Tibial artery (tissue), 4 donors: ENCODE measurements at regions of chr3 and their contacts with region 1.

Region 1: GRCh38 chr3:48439820-48440589 is at the starts of genes CCDC51 and TMA7:
- DNase-seq: peak; percentile 99
- H3K4me3 ChIP-seq: peak within 1 kb of the TSS; percentile 84 to 96
- H3K27ac ChIP-seq: peak within 1 kb of the TSS; percentile 93 to 94
- H3K4me1 ChIP-seq: peaks cover 5 to 36% (median 18%) of the 10 kb centered on the region in 4 donors
- H3K27me3 ChIP-seq: no peaks in the 10 kb centered on the region
- CTCF ChIP-seq: no peak

Region 2: GRCh38 chr3:48232734-48233133 is 207.3 kb before region 1 on chr3:
- intact Hi-C with region 1: loop called (anchors 10 kb)
- DNase-seq: peak; percentile 81 to 86
- H3K4me3 ChIP-seq: no peak overlapping the region
- H3K27ac ChIP-seq: no peak overlapping the region
- H3K4me1 ChIP-seq: peaks cover 0 to 9% (median 2%) of the 10 kb centered on the region in 4 donors
- H3K27me3 ChIP-seq: no peaks in the 10 kb centered on the region
- CTCF ChIP-seq: peak; percentile 41 to 45

Region 3: GRCh38 chr3:48275292-48276015 is 164.6 kb before region 1 on chr3:
- intact Hi-C with region 1: loop called (anchors 2 kb)
- DNase-seq: no peak
- H3K4me3 ChIP-seq: no peak overlapping the region
- H3K27ac ChIP-seq: no peak overlapping the region
- H3K4me1 ChIP-seq: no peaks in the 10 kb centered on the region
- H3K27me3 ChIP-seq: no peaks in the 10 kb centered on the region
- CTCF ChIP-seq: no peak

Region 4: GRCh38 chr3:48285675-48286074 is 154.3 kb before region 1 on chr3:
- intact Hi-C with region 1: no loop called
- DNase-seq: no peak
- H3K4me3 ChIP-seq: no peak overlapping the region
- H3K27ac ChIP-seq: no peak overlapping the region
- H3K4me1 ChIP-seq: no peaks in the 10 kb centered on the region
- H3K27me3 ChIP-seq: no peaks in the 10 kb centered on the region
- CTCF ChIP-seq: no peak

Region 5: DNA sequence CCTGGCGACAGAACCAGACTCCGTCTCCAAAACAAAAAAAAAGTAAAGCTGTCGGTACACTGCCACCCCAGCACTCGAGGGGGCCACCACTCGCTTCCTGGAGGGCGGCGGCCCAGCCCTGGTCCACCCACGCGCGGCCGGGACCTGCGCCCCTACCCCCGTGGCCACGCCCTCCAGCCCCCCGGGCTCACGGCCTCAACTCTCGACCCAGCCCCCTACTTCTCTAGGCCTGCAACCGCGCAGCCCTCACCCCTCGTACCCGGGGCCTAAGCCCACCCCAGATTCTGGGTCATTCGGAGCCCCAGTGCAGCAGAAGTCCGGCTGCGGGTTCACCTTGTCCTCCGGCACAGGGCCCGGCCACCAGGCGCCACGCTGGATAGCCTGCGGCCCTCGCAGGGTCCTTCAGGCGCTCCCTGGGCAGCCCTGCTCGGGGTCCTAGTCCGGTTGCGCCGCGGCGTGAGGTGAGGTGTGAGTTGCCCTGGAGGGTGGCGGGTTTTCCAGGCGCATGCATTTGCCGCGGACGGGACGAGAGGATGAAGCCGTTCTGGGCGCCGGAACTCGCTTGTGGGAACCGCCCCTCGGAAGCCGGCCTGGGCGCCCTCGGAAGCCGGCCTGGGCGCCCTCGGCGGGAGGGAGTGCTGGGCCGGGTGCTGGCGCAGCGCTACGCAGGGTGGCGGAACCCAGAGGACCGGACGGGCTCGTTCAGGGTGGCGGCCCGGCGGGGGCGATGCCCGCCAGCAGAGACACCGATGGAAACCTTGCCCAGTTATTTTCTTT is 138.8 kb before region 1 on chr3:
- intact Hi-C with region 1: loop called (anchors 10 kb)
- DNase-seq: peak; percentile 90 to 95
- H3K4me3 ChIP-seq: peak within 1 kb of the TSS; percentile 91 to 96
- H3K27ac ChIP-seq: peak within 1 kb of the TSS; percentile 97 to 99
- H3K4me1 ChIP-seq: peaks cover 0 to 18% (median 13%) of the 10 kb centered on the region in 4 donors
- H3K27me3 ChIP-seq: no peaks in the 10 kb centered on the region
- CTCF ChIP-seq: no peak

Region 6: GRCh38 chr3:48400824-48401433 is 39.1 kb before region 1 on chr3:
- intact Hi-C with region 1: loop called (anchors 2 kb)
- DNase-seq: peak in 1 of 2 donors; percentile 72
- H3K4me3 ChIP-seq: no peak overlapping the region
- H3K27ac ChIP-seq: peak overlapping the region; percentile 84 to 85
- H3K4me1 ChIP-seq: peaks cover 0 to 52% (median 47%) of the 10 kb centered on the region in 4 donors
- H3K27me3 ChIP-seq: no peaks in the 10 kb centered on the region
- CTCF ChIP-seq: peak; percentile 80 to 95

Region 7: GRCh38 chr3:49153349-49153912 is 713.4 kb after region 1 on chr3:
- intact Hi-C with region 1: no loop called
- DNase-seq: no peak
- H3K4me3 ChIP-seq: no peak overlapping the region
- H3K27ac ChIP-seq: no peak overlapping the region
- H3K4me1 ChIP-seq: no peaks in the 10 kb centered on the region
- H3K27me3 ChIP-seq: no peaks in the 10 kb centered on the region
- CTCF ChIP-seq: no peak